ENCODE measurements at regions of chr11 and their contacts with region 1.

Region 1: GRCh38 chr11:118145285-118146227 is 7.1 kb downstream of the SCN4B start:
- DNase-seq: peak; percentile 83
- H3K4me3 Mint-ChIP-seq: peak overlapping the region; percentile 81
- H3K27ac Mint-ChIP-seq: peak overlapping the region; percentile 24
- H3K4me1 Mint-ChIP-seq: peaks cover 6% of the 10 kb centered on the region
- H3K27me3 Mint-ChIP-seq: peaks cover 66% of the 10 kb centered on the region

Region 2: GRCh38 chr11:117807482-117808327 is 337.9 kb before region 1 on chr11:
- intact Hi-C with region 1: loop called (anchors 10 kb)
- DNase-seq: peak; percentile 54
- H3K4me3 Mint-ChIP-seq: no peak overlapping the region
- H3K27ac Mint-ChIP-seq: no peak overlapping the region
- H3K4me1 Mint-ChIP-seq: peaks cover 8% of the 10 kb centered on the region
- H3K27me3 Mint-ChIP-seq: peaks cover 10% of the 10 kb centered on the region

Region 3: DNA sequence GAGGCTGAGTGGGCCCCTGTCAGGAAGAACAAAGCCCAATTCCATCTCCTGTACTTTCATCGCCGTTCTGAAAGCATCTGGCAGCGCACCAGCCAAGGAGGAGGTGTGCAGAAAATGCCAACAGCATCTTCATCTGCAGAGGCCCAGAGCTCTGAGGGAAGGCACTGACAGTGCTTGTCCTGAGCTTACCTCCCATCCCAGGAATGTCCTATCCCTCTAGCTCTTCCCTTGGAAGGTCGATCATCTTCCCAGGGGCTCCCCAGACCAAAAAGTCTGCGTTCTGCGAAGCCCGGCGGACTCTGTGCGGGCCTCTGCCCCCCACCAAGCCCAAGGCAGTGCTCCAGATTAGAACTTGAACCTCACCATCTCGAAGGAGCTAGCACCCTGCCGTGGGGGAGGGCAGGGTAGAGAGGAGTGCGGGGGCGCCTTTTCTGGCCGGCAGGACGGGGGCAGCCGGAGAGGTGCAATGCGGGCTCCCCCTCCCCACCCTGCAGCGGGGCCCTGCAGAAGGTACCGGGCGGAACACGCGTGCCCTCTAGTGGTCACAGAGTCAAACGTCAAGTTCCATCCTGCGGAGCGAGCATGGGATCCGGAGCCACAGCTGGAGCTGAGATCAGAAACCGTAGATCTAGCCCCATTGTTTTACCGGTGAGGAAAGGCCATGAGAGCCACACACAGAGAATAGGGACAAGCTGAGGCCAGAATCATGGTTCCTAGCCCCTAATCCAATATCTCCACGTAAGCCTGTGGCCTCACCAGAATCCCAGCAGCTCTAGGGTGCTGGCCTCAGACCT is 25.9 kb after region 1 on chr11:
- intact Hi-C with region 1: loop called (anchors 1 kb)
- DNase-seq: peak; percentile 65
- H3K4me3 Mint-ChIP-seq: no peak overlapping the region
- H3K27ac Mint-ChIP-seq: no peak overlapping the region
- H3K4me1 Mint-ChIP-seq: no peaks in the 10 kb centered on the region
- H3K27me3 Mint-ChIP-seq: peaks cover 27% of the 10 kb centered on the region

Region 4: GRCh38 chr11:118290923-118291322 is 145.4 kb after region 1 on chr11:
- intact Hi-C with region 1: loop called (anchors 1 kb)
- DNase-seq: peak; percentile 21
- H3K4me3 Mint-ChIP-seq: no peak overlapping the region
- H3K27ac Mint-ChIP-seq: no peak overlapping the region
- H3K4me1 Mint-ChIP-seq: peaks cover 22% of the 10 kb centered on the region
- H3K27me3 Mint-ChIP-seq: no peaks in the 10 kb centered on the region

Region 5: GRCh38 chr11:118353084-118353710 is 207.6 kb after region 1 on chr11:
- intact Hi-C with region 1: loop called (anchors 5 kb)
- DNase-seq: no peak
- H3K4me3 Mint-ChIP-seq: no peak overlapping the region
- H3K27ac Mint-ChIP-seq: peak overlapping the region; percentile 68
- H3K4me1 Mint-ChIP-seq: peaks cover 13% of the 10 kb centered on the region
- H3K27me3 Mint-ChIP-seq: no peaks in the 10 kb centered on the region

Region 6: DNA sequence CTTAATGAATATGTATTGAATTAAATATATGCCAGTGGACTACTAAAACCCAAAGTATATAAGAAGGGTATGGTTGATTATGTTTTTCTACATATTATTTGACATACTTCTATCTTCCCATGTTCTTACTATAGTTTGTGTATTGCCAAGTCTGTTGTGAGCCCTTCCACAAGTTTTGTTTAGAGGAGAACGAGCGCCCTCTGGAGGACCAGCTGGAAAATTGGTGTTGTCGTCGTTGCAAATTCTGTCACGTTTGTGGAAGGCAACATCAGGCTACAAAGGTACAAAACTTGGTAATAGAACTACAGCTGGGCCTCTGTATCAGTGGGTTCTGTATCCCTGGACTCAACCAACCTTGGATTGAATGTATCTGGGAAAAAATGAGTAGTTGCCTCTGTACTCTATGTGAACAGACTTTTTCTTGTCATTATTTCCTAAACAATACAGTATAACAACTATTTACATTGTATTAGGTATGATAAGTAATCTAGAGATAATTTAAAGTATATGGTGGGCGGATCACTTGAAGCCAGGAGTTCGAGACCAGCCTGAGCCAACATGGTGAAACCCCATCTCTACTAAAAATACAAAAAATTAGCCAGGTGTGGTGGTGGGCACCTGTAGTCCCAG is 343.0 kb after region 1 on chr11:
- intact Hi-C with region 1: loop called (anchors 1 kb)
- DNase-seq: peak; percentile 67
- H3K4me3 Mint-ChIP-seq: no peak overlapping the region
- H3K27ac Mint-ChIP-seq: peak overlapping the region; percentile 18
- H3K4me1 Mint-ChIP-seq: peaks cover 5% of the 10 kb centered on the region
- H3K27me3 Mint-ChIP-seq: no peaks in the 10 kb centered on the region

Region 7: DNA sequence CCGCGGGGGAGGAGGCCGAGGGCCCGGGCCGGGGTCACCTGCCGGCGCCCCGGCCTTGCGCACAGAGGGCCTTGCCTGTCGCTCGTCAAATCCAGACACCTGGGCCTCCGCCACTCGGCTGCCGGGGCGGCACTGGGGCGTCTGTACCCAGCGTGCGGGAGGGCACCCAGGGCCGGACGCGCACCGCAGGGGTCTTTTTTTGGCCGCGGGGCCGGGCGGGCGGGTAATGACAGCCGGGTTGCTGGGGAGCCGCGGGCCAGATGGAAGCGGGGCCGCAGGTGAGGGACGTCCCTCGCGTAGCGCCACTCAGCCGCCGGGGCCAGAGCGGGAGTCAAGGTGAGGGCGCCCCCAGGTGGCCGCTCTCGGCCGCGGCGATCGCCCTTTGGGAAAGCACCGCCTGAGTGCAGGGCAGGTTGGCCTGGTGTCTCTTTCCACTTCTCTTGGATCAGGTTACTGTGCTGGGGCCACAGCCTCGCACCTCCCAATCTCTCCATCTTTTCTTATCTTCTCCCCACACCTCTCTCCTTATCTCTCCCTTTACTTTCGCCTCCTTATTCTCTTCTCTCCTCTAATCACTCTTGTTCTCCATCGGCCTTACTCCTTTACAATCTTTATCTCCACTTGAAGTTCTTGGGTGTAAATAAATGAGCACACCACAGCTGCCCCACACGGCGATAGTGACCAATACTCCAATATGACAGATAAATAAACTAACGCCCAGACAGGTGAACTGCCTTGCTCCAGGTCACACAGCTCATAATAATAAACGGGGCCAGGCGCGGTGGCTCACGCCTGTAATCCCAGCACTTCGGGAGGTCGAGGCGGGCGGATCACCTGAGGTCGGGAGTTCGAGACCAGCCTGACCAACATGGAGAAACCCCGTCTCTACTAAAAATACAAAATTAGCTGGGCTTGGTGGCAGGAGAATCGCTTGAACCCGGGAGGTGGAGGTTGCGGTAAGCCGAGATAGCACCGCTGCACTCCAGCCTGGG is 465.5 kb after region 1 on chr11:
- intact Hi-C with region 1: loop called (anchors 2 kb)
- DNase-seq: peak; percentile 72
- H3K4me3 Mint-ChIP-seq: peak overlapping the region; percentile 57
- H3K27ac Mint-ChIP-seq: no peak overlapping the region
- H3K4me1 Mint-ChIP-seq: peaks cover 18% of the 10 kb centered on the region
- H3K27me3 Mint-ChIP-seq: peaks cover 29% of the 10 kb centered on the region

Region 8: DNA sequence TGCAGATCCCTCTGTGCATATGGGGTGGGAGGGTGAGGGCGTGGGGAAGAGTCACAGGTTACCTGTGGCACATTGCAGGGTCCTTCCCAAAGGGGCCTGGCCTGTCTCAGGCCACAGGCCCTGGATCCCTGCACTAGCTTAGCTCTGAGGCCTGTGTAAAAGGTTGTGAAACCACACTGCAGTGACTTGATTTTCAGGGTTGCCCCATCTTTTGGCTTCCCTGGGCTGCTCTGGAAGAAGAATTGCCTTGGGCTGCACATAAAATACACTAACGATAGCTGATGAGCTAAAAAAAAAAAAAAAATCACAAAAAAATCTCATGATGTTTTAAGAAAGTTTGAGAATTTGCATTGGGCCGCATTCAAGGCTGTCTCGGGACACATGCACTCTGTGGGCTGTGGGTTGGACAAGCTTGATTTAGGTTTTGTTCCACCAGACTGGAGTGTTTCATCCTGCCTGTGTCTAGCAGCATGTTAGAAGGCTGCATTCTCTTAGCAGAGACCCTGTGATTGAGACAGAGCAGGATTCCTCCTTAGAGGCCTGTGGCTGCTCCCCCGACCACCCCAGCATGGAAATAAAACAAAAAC is 569.8 kb after region 1 on chr11:
- intact Hi-C with region 1: no loop called
- DNase-seq: no peak
- H3K4me3 Mint-ChIP-seq: no peak overlapping the region
- H3K27ac Mint-ChIP-seq: no peak overlapping the region
- H3K4me1 Mint-ChIP-seq: peaks cover 4% of the 10 kb centered on the region
- H3K27me3 Mint-ChIP-seq: peaks cover 6% of the 10 kb centered on the region

Measured in activated T-helper 2 cell treated with anti-CD3 and anti-CD28 coated beads, Interferon-gamma antibody, Interleukin-2, Interleukin-4, amounts not matched to agents 10 μg/mL and 5 μg/mL and 100 μg/mL, durations not matched to agents 14 hours and 24 hours and 36 hours (primary cell).